Left ventricle myocardium superior (tissue), 1 donor: ENCODE measurements at regions of chr9 and their contacts with region 1.

Region 1: DNA sequence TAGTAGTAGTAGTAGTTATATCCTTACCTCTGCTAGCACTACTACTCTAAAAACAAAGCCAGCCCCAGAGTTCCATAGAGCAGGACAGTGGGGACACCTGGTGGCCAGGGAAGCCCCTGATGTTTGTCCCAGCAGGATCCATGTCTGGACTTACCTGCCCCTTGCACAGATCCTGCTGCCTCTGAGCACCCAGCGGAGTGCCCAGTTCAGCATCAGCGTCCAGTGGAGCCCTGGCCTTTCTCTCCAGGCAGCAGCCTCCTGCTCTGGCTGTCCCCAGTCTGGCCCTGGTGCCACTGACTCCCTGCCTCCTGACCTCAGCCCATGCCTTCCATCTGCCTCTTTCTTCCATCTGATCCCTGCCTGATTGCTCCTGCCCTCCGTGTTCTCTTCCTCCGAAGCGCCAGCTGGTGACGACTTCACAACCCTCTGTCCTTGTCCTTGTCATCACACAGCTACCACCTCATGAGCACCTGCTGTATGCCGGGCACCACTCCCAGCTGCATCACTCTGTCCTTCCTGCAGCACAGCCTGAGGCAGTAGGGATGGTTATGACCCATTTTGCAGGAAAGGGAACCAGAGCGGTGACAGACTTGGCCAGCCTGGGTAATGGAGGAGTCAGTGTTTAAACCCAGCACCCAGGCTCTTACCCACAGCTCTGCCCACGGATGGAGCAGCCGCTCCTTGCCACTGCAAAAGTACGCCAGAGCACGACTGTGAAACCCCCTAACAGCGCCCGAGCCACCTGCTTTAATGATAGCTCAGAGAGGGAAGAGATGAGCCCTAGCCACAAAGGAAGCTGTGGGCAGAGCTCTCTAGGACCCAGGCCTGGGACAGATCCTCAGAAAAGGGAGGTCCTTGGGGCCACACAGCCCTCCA is 11.5 kb downstream of the SARDH start:
- DNase-seq: peak; percentile 77
- ATAC-seq: peak; percentile 91

Region 2: DNA sequence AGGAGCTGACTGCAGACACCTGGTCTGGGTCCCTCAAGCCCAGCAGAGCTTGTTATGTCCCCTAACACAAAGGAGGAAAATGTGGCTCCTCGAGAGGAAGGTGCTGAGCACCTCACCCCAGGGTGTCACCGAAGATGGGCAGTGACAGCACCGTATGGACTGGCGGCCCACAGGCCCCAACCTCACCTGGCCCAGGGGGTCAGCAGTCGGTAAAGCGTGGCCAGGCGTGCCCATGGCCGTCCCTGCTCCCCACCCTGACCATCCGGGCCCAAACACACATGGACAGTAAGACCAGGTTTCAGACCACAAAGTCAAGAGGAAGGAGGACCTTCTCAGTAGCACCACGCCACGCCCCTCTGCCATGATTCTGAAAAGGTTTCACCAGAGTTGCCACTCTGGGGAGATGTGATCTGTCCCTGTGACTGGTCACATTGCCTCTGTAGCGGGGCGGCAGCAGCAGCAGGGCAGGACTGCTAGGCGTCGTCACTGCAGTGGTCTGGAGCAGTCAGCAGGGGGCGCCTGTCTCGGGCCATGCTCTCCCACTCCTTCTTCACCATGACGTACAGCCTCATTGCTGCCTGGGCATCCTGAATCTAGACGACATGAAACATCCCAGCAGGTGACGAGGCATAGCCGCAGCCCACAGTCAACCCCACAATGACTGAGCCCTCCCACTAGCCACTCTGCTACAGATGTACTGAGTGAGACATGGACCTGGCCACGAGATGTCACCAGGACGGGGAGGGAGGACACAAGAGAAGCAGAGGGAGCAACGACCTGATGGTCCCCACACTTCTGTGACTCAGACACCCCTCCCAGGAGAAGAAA is 319.9 kb before region 1 on chr9:
- intact Hi-C with region 1: loop called (anchors 10 kb)
- DNase-seq: peak; percentile 81
- ATAC-seq: peak; percentile 82

Region 3: DNA sequence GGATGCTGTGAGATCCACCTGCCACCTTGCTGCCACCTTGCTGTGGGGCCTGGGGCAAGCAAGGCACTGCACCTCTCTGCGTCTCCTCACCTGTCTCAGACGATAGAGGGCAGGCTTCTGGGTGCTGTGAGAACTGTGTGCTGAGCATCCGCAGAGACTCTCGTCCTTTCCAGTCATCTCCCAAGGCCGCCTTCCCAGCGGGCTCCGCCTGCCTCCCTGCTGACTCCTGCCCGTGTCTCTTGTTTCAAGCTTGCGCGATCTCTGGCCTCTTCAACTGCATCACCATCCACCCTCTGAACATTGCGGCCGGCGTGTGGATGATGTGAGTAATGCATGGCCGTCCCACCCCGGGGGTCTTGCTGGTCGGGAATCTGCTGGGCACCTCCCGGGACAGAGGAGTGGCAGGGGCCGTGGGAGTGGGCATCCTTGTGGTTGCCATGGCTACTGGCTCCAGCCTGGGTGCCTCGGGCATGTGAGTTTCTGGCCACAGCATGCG is 263.4 kb before region 1 on chr9:
- intact Hi-C with region 1: no loop called
- DNase-seq: no peak
- ATAC-seq: no peak

Region 4: DNA sequence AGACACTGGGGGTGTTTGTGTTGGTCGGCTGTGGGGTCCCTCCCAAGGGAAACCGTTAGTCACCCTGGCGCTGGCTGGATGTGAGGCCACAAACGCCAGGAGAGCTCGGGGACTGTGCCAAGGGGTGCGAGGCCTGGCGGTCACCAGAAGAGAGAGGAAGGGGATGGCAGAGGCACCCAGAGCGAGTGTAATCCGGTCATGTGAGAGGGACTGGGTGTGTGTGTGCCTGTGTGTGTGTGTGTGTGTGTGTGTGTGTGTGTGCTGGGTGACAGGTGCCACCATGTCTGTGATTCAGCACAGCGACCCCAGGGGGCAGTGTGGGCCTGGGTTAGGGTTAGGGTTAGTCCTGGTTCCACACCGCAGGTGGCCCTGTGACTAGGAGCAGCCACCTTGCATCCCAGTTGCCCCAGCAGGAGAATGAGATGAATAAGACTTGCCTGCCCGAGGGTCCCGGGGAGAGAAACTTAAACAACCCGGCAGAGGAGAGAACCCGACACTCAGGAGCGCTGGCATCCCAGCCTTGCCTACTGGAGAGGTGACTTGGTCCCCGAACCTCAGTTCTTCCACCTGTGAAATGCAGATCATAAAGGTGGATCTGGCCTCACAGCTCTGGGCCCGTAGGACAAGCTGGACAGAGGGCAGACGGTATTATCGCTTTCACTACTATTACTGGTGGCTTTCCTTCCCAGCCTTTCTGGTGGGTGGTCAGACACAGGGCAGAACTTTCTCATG is 193.5 kb before region 1 on chr9:
- intact Hi-C with region 1: loop called (anchors 5 kb)
- DNase-seq: peak; percentile 83
- ATAC-seq: peak; percentile 57